Tibial artery (tissue), 4 donors: ENCODE measurements at regions of chr3 and their contacts with region 1.

Region 1: DNA sequence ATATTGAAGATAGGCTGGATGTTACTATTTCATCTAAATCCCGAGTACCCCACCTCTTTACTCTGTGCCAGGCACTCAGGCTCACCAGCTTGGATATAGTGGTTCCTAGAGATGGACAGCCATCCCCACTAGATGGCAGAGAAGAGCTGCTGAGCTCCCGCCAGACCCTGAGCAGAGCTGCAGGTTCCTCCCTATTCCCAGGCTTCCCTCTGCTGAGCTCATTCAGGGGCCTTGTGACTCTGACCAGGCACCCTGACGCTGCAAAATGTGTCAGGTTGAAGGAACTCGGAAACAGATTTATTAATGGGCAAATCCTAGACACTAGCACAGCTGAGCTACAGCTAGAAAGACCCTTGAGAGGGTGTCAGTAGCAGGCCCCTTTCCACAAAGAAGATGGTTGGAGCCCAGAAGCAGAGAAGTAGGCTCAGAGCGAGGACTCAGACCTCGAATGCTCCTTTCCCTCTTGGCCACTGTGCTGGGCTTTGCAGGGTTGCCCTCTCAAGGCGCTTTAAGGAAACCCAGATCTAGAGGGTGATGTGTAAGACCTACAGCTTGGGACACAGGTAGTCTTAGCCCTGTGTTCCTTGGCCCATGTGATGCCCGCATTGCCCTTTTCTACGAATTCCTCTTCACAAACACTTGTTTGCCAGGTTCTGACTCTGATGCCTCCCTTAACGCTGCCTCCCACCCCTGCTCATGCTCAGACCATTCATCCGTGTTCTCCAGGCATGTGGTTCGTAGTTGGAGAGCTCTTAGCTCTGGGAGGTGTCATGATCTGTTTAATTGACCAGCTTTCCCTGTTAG is 38.0 kb upstream of the RHO start:
- DNase-seq: peak; percentile 94 to 95
- H3K4me3 ChIP-seq: no peak overlapping the region
- H3K27ac ChIP-seq: peak overlapping the region; percentile 79 to 82
- H3K4me1 ChIP-seq: peaks cover 0 to 37% (median 15%) of the 10 kb centered on the region in 4 donors
- H3K27me3 ChIP-seq: no peaks in the 10 kb centered on the region
- CTCF ChIP-seq: peak; percentile 89 to 93

Region 2: GRCh38 chr3:129558772-129559564 is 68.5 kb after region 1 on chr3:
- intact Hi-C with region 1: loop called (anchors 5 kb)
- DNase-seq: no peak
- H3K4me3 ChIP-seq: no peak overlapping the region
- H3K27ac ChIP-seq: peak overlapping the region; percentile 86 to 90
- H3K4me1 ChIP-seq: peaks cover 12 to 98% (median 82%) of the 10 kb centered on the region in 4 donors
- H3K27me3 ChIP-seq: no peaks in the 10 kb centered on the region
- CTCF ChIP-seq: no peak

Region 3: GRCh38 chr3:129611812-129612533 is 121.5 kb after region 1 on chr3:
- intact Hi-C with region 1: loop called (anchors 5 kb)
- DNase-seq: peak in 1 of 2 donors; percentile 52
- H3K4me3 ChIP-seq: no peak overlapping the region
- H3K27ac ChIP-seq: peak overlapping the region; percentile 61 to 79
- H3K4me1 ChIP-seq: peaks cover 8 to 77% (median 59%) of the 10 kb centered on the region in 4 donors
- H3K27me3 ChIP-seq: no peaks in the 10 kb centered on the region
- CTCF ChIP-seq: no peak

Region 4: DNA sequence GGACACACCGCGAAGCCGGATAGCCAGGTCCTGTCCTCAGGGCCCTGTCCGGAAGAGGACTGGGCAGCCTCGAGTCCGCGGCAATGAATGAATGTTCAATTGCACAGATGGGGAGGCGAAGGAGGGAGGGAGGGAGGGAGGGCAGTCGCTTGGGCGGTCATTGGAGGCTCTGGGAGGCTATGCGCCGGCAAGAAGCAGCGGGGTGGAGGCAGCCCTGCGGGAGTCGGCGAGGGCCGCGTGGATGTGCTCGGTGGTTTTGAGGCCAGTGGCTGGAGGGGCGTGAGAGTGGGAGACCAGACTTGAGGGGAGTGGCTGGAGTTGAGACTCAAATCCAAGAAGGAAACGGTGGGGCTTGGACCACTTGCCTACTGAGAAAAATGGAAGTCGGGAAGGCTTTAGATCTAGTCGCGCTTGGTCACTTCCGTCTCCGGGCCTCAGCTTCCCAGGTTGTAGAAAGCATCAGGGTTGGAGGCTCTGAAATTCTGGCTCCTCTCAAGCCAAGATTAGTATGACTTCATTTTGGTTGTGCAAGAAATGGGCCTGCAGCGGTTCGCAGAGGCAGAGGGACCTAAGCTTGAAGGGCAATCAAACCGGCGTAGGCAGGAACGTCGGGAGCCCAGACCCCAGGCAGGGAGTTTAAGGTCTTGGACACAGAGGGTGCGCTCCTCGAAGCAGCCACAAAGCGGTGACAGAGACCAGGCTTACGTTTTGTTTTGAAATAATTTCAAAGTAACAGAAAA is 137.2 kb after region 1 on chr3:
- intact Hi-C with region 1: loop called (anchors 5 kb)
- DNase-seq: peak; percentile 83 to 90
- H3K4me3 ChIP-seq: peak overlapping the region; percentile 56 to 65
- H3K27ac ChIP-seq: peak overlapping the region; percentile 96 to 98
- H3K4me1 ChIP-seq: peaks cover 0 to 62% (median 48%) of the 10 kb centered on the region in 4 donors
- H3K27me3 ChIP-seq: no peaks in the 10 kb centered on the region
- CTCF ChIP-seq: peak; percentile 64 to 70

Region 5: DNA sequence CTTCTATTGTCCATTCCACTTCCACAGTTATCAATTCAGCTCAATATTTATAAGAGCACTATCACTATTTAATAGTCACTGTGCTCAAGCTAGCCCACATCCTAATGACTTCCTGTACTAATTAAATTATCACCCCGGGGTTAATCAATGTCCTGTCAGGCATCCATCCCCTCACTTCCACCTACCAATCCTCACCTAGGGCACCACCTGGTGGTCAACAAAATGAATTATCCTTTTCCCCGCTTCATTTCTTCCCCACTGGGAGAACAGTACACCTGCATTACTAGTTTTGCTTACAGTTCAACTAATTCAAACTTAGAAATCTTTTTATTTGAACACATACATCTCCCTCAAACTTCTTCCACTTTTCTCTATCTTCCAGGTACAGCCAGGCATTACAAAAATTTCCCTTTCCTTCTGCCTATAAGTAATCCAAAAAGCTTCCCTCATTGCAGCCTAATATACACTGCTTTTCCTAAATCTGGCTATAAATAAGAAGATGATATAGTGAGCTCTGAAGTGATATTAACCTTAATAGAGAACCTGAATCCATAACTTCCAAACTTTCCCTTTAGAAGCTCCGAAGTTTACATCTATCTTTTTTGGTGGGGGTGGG is 334.6 kb after region 1 on chr3:
- intact Hi-C with region 1: loop called (anchors 5 kb)
- DNase-seq: no peak
- H3K4me3 ChIP-seq: no peak overlapping the region
- H3K27ac ChIP-seq: no peak overlapping the region
- H3K4me1 ChIP-seq: peaks cover 0 to 9% (median 4%) of the 10 kb centered on the region in 4 donors
- H3K27me3 ChIP-seq: no peaks in the 10 kb centered on the region
- CTCF ChIP-seq: peak; percentile 54 to 62

Region 6: DNA sequence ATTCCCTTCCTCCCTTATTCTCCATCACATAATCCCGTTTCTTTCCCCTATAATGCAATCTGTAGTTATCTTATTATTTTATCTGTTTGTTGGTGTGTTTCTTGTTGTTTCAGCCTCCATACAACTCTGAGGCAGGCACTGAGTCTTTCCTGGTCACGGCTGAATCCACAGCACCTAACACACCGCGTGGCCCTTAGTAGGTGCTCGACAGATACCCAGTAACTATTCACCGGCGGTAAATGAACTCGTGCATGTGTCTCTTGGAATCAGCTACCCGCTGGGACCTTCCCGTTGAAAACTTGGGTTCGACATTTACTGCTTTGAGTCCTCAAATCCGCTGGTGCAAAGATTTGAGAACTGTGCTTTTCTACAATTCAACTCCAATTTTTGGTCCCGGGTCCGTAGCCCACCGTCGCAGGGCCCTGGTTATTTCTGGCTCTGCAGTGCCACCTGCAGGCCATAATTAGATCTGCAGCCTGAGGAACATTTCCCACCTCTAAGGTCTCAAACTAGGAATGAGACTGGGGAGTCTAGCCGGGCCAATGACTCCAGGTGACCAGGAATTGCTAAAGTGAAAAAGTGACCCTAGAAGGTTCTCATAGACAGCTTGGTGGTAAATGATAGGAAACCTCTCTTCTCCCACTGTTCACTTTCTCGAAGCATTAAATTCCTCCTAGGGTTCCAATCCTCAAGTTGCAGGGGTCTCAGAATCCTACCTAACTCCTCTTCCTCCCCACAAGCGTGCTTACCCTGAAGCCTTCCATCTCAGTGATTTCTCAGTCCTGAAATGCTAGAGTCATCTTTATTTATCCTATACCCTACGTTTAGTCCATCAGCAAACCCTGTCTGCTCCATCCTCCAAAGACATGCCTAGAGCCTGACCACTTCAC is 444.0 kb after region 1 on chr3:
- intact Hi-C with region 1: loop called (anchors 5 kb)
- DNase-seq: no peak
- H3K4me3 ChIP-seq: no peak overlapping the region
- H3K27ac ChIP-seq: no peak overlapping the region
- H3K4me1 ChIP-seq: peaks cover 0 to 5% (median 0%) of the 10 kb centered on the region in 4 donors
- H3K27me3 ChIP-seq: no peaks in the 10 kb centered on the region
- CTCF ChIP-seq: peak; percentile 87 to 90